Brain microvascular endothelial cell (primary cell): ENCODE measurements at regions of chr10 and their contacts with region 1.

Region 1: DNA sequence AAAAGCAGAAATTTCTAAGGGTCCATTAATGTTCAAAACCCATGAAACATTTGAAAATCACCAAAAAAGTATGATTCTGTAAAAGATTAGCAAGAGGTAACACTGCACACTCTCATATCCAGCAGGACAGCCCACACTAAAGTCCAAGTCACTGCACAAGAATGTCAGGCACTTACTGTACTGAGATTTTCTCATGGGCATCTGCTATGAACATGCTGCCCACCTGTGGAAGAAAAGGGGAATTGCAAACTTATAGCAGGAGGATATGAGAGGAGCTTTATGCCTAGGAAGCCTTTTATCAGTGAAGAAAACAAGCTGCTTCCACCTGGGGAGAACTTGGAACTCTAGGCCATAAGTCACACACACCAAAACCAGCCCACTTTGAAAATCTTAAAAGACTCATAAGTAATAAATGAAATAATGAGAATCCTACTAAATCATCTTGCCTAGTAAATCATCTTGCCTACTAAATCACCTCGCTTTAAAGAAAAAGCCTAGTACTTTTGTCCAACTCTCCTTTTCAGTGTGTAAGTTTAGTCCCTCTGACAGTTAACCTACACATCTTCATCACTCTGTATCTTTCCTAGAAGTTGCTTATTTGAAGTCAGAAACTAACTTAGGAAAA is 46.1 kb downstream of the ARMH3 start:
- DNase-seq: peak; percentile 90
- H3K4me3 ChIP-seq: no peak overlapping the region
- H3K27ac ChIP-seq: no peak overlapping the region
- H3K27me3 ChIP-seq: no peaks in the 10 kb centered on the region
- CTCF ChIP-seq: peak; percentile 98

Region 2: GRCh38 chr10:101818119-101818871 is 191.6 kb before region 1 on chr10 and contains the start of gene OGA:
- in situ Hi-C with region 1: no loop called
- DNase-seq: peak; percentile 99
- H3K4me3 ChIP-seq: peak within 1 kb of the TSS; percentile 98
- H3K27ac ChIP-seq: peak within 1 kb of the TSS; percentile 93
- H3K27me3 ChIP-seq: no peaks in the 10 kb centered on the region
- CTCF ChIP-seq: no peak

Region 3: GRCh38 chr10:101889256-101890210 is 120.4 kb before region 1 on chr10:
- in situ Hi-C with region 1: loop called (anchors 25 kb)
- DNase-seq: peak; percentile 83
- H3K4me3 ChIP-seq: no peak overlapping the region
- H3K27ac ChIP-seq: no peak overlapping the region
- H3K27me3 ChIP-seq: no peaks in the 10 kb centered on the region
- CTCF ChIP-seq: peak; percentile 94

Region 4: DNA sequence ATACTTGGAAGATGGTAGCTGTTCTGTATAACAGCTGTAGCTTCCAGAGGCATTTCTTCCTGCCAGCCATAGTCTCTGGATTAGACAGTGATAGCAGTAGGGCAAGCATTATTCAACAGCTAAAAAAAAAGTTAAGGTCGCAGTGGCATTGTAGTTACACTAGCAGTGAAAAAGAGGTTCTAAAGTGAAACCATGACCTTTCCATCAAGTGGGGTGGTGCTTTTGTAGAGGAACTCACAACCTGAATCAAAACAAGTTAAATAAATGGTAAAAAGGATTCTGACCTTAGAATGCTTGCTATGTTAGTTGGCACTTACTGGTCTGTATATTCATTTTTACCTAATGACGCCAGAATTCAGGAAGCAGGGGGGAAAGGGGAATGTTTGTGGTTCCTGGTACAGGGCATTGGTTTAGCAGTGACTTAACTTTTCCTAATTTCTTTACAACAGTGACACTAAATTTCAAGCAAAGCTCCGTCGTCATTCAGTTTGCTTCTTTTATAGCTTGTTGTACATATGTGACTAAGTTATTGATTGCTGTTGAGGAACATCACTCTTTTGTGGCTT is 290.4 kb after region 1 on chr10:
- in situ Hi-C with region 1: no loop called
- DNase-seq: peak; percentile 73
- H3K4me3 ChIP-seq: no peak overlapping the region
- H3K27ac ChIP-seq: peak overlapping the region; percentile 83
- H3K27me3 ChIP-seq: no peaks in the 10 kb centered on the region
- CTCF ChIP-seq: no peak